ENCODE measurements at regions of chr10 and their contacts with region 1.

Region 1: DNA sequence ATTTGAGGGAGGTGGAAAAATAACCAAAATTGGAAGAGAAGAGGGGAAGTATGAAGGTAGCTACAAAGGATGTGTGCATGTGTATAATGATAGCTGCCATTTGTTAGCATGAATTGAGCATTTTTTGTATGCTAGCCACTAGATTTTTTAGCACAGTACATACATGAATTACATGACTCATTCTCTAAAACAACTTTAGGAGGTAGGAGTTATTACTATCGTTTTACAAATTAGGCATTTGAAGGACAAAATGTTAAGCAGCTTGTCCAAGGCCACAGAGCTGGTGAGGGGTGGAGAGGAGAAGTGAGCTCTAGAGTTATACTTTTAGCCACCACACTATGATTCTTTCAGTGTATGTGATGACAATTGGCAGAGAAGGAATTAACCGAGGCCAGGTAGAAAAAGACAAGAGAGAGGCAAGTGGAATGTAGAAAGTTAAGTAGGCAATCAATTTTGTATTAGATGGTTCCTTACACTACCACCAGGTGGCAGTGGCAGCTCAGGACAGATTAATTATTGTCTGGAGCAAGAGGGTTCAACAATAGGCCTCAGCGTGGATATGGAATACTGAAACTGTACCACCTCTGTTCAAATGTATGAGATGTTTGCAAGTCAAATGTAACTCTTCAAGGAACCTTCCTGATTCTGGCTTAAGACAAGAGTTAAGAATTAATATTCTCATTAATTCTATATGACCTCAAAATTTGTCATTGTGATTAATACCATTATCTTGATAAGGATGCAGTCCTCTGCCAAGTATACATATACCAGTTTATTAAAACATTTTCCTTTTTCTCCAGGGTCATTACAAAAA is 128.0 kb downstream of the MBL2 start:
- DNase-seq: peak; percentile 72
- H3K4me3 Mint-ChIP-seq: no peak overlapping the region
- H3K27ac Mint-ChIP-seq: no peak overlapping the region
- H3K4me1 Mint-ChIP-seq: no peaks in the 10 kb centered on the region
- H3K27me3 Mint-ChIP-seq: peaks cover 24% of the 10 kb centered on the region
- CTCF ChIP-seq: peak; percentile 77

Region 2: DNA sequence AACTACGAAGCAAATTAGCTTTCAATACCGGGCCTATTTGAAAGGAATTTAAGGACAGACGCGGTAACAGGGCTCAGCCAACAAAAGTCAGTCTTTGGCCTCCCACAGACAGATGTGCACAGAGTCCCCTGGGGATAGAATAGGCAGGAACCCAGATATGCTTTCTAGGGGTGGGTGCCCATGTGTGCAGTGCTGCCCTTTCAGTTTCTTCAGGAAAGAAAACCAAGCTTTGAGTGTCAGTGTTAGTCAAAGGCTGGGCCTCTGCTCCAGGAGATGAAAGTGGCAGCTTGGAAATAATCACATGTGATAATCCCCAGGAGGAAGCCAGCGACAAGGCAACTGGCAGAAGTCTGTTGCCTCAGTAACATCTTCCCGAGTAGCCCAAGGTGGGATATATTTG is 901.4 kb before region 1 on chr10:
- CTCF ChIA-PET with region 1: no interaction called
- POLR2A ChIA-PET with region 1: no interaction called
- intact Hi-C with region 1: no loop called
- DNase-seq: no peak
- H3K4me3 Mint-ChIP-seq: no peak overlapping the region
- H3K27ac Mint-ChIP-seq: no peak overlapping the region
- H3K4me1 Mint-ChIP-seq: no peaks in the 10 kb centered on the region
- H3K27me3 Mint-ChIP-seq: no peaks in the 10 kb centered on the region
- CTCF ChIP-seq: no peak

Region 3: DNA sequence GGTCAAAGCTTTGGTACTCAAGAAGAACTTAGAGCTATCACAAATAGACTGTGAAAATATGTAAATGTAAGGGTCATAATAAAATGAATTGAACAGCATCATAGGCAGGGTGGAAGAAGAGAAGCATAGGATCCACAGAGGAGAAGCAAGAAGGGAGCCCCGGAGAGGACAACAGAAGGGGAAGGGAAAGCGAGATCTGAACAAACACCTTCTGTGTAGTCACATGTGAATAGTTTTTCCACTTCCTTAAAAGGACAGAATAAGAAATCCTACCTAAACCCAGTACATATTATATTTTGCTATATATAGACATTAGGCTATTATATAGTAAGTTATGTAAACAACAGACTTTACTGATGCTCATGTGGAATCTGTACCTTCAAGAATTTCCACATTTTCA is 170.3 kb before region 1 on chr10:
- CTCF ChIA-PET with region 1: no interaction called
- POLR2A ChIA-PET with region 1: no interaction called
- intact Hi-C with region 1: no loop called
- DNase-seq: no peak
- H3K4me3 Mint-ChIP-seq: no peak overlapping the region
- H3K27ac Mint-ChIP-seq: no peak overlapping the region
- H3K4me1 Mint-ChIP-seq: no peaks in the 10 kb centered on the region
- H3K27me3 Mint-ChIP-seq: no peaks in the 10 kb centered on the region
- CTCF ChIP-seq: no peak

Region 4: GRCh38 chr10:52533986-52534385 is 110.6 kb before region 1 on chr10:
- CTCF ChIA-PET with region 1: no interaction called
- POLR2A ChIA-PET with region 1: no interaction called
- intact Hi-C with region 1: no loop called
- DNase-seq: peak; percentile 27
- H3K4me3 Mint-ChIP-seq: no peak overlapping the region
- H3K27ac Mint-ChIP-seq: peak overlapping the region; percentile 65
- H3K4me1 Mint-ChIP-seq: peaks cover 17% of the 10 kb centered on the region
- H3K27me3 Mint-ChIP-seq: no peaks in the 10 kb centered on the region
- CTCF ChIP-seq: no peak

Region 5: DNA sequence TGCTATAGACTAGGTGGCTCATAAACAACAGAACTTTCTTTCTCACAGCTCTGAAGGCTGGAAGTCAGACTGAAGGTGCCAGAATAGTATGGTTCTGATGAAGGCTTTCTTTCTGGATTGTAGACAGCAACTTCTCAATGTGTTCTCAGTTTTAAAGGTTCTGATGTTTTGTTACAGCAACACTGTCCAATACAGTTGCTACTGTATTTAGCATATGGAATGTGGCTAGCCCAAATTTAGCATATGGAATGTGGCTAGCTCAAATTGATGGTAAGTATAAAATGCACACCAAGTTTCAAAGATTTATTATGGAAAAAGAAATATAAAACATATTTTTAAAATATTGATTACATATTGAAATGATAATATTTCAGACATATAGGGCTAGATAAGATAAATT is 17.3 kb before region 1 on chr10:
- CTCF ChIA-PET with region 1: interaction called, 26 read pairs
- POLR2A ChIA-PET with region 1: interaction called, 3 read pairs
- intact Hi-C with region 1: no loop called
- DNase-seq: no peak
- H3K4me3 Mint-ChIP-seq: no peak overlapping the region
- H3K27ac Mint-ChIP-seq: no peak overlapping the region
- H3K4me1 Mint-ChIP-seq: no peaks in the 10 kb centered on the region
- H3K27me3 Mint-ChIP-seq: peaks cover 10% of the 10 kb centered on the region
- CTCF ChIP-seq: no peak

Region 6: DNA sequence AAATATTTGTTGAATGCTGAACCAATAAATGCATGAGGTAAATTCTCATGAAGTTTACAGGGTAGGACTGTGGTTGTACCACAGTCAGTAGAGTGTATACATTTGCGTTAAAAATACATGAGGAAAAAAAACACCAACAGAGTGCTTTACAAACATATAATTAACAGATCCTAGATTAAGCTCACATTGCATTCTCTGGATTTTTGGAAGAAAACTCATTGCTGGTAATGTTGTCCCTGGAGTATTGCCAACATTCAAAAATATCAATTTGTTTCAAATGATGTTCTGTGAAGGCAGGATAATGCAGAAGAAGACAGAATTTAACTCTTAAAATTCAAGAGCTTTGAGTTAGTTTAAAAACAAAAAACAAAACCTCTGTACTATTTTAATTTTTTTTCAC is 32.5 kb after region 1 on chr10:
- CTCF ChIA-PET with region 1: interaction called, 22 read pairs
- POLR2A ChIA-PET with region 1: no interaction called
- intact Hi-C with region 1: no loop called
- DNase-seq: no peak
- H3K4me3 Mint-ChIP-seq: no peak overlapping the region
- H3K27ac Mint-ChIP-seq: no peak overlapping the region
- H3K4me1 Mint-ChIP-seq: no peaks in the 10 kb centered on the region
- H3K27me3 Mint-ChIP-seq: no peaks in the 10 kb centered on the region
- CTCF ChIP-seq: no peak

Region 7: GRCh38 chr10:52729271-52730104 is 84.9 kb after region 1 on chr10:
- CTCF ChIA-PET with region 1: interaction called, 89 read pairs
- POLR2A ChIA-PET with region 1: interaction called, 4 read pairs
- intact Hi-C with region 1: loop called (anchors 1 kb)
- DNase-seq: peak; percentile 50
- H3K4me3 Mint-ChIP-seq: no peak overlapping the region
- H3K27ac Mint-ChIP-seq: no peak overlapping the region
- H3K4me1 Mint-ChIP-seq: no peaks in the 10 kb centered on the region
- H3K27me3 Mint-ChIP-seq: no peaks in the 10 kb centered on the region
- CTCF ChIP-seq: peak; percentile 58

Region 8: DNA sequence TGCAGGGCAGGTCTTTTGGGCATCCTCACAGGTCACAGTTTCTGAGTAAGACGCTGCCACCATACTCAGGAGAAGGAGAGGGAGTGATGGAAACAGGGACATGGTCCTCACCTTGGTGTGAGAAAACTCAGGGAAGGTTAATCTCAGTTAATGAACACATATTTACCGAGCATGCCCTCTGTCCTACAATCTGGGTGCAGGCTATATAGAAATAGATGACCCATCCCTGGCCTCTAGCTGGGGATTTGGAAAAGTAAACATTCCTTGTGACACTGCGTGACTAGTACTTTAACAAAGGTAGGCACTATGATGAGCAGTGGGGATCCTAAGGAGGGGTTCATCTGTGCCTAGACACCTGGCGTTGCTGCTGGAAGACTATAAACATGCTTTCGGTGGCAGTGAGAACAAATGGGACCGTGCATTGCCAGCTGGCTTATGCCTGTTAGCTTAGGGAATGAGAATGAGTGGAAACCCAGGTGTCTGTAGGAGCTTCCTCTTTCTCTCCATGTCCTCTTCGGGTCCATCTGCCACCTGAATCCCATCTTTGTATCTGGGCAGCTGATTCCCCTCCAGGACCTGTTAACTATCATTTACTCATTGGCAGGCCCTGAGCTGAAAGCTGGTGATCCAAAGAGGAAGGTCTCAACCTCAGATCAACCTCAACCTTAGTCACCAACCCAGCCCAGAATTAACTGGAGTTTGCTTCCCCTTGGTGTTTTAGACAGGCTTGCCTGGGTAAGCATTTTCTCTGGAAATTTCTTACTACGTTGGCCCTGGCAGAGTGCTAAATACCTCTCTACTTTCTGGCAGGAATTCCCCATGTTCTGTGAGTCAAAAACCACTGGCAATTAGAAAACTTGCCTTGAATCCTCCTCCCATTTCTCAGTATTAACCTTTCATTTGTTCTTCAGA is 127.2 kb after region 1 on chr10:
- CTCF ChIA-PET with region 1: interaction called, 14 read pairs
- POLR2A ChIA-PET with region 1: no interaction called
- intact Hi-C with region 1: no loop called
- DNase-seq: no peak
- H3K4me3 Mint-ChIP-seq: no peak overlapping the region
- H3K27ac Mint-ChIP-seq: no peak overlapping the region
- H3K4me1 Mint-ChIP-seq: no peaks in the 10 kb centered on the region
- H3K27me3 Mint-ChIP-seq: no peaks in the 10 kb centered on the region
- CTCF ChIP-seq: no peak

Measured in MCF 10A (cell line).